Heart left ventricle (tissue), 16 donors: ENCODE measurements at regions of chr21 and their contacts with region 1.

Region 1: DNA sequence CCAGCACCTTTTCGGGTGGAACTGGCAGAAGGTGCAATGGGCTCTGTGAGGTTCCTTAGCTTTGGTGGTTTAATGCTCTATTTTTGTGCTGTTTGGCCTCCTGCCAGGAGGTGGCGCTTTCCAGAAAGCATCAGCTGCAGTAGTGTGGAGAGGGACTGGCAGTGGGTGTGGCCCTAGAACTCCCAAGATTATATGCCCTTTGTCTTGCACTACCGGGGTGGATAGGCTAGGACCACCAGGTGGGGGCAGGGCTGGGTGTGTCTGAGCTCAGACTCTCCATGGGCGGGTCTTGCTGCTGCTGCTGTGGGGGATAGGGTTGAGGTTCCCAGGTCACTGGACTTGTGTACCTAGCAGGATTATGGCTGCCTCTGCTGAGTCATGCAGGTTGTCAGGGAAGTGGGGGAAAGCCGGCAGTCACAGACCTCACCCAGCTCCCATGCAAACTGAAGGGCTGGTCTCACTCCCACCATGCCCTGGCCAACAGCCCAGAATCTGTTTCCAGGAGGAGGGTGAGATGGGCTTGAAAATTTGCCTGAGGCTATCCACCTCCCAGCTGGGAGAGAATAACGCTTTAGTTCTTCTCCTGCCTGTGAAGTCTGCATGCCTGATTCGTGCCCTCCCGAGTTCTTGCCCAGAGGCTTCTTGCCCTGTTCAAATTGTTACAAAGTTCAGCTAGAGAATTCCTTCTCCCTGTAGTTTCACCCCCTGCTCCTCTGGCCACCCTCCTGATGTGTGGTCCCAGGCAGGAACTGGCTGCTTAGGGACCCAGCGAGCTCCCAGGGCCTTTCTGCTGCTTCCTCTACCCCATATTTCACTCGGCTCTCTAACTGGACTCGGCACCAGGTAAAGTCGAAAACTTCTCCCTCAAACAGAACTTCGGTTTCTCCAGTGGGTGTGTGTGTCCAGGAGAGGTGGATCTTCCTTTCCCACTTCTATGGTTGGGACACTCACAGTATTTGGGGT is 76.5 kb upstream of the BTG3 start:
- DNase-seq: peak; percentile 33 to 61 (median 44)
- ATAC-seq: peak in 2 of 4 donors; percentile 45 to 52
- H3K4me3 ChIP-seq: no peak overlapping the region
- H3K27ac ChIP-seq: no peak overlapping the region
- H3K4me1 ChIP-seq: peaks cover 0 to 20% (median 8%) of the 10 kb centered on the region in 12 donors
- H3K27me3 ChIP-seq: no peaks in the 10 kb centered on the region
- CTCF ChIP-seq: peak in 6 of 12 donors; percentile 17 to 33 (median 24)
- POLR2A ChIP-seq: no peak

Region 2: GRCh38 chr21:17726047-17726830 is 37.0 kb after region 1 on chr21:
- intact Hi-C with region 1: loop called in 1 of 10 experiments (anchors 5 kb)
- DNase-seq: no peak
- ATAC-seq: no peak
- H3K4me3 ChIP-seq: no peak overlapping the region
- H3K27ac ChIP-seq: no peak overlapping the region
- H3K4me1 ChIP-seq: peaks cover 0 to 10% (median 0%) of the 10 kb centered on the region in 12 donors
- H3K27me3 ChIP-seq: no peaks in the 10 kb centered on the region
- CTCF ChIP-seq: peak in 2 of 12 donors; percentile 20 to 24
- POLR2A ChIP-seq: no peak

Region 3: DNA sequence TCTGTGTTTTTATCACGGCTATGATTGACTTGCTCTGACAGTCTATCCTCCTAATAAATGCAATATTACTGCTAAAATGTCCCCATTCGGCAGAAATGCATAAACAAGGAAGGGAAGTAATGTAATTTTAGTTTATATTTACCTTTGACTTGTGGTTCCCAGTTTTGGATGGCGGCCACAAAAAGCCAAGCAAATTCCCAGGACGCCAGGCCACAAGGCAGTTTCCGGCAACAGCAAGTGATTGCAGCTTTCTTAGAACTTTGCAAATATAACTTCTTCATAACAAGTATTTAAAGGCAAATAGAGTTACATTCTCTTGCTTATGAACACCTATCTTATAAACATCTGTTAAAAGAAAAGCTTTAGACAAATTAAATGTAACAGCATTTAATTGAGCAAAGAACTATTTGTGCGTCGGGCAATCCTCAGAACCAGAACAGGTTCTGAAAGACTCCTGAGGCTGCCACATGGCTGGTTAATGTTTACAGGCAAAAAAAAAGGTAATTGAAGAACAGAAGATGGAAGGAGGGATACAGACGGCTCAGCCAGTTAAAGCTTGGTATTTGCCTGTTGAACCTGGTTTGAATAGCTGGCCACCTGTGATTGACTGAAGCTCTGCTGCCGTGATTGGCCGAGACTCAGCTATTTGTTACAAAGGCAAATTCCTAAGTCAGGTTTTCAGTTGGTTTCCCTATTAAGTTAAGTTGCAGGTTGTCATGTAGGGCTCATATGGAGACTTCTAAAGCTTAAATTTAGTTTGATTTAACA is 49.2 kb after region 1 on chr21:
- intact Hi-C with region 1: no loop called
- DNase-seq: peak in 1 of 5 donors; percentile 24
- ATAC-seq: no peak
- H3K4me3 ChIP-seq: no peak overlapping the region
- H3K27ac ChIP-seq: no peak overlapping the region
- H3K4me1 ChIP-seq: peaks cover 0 to 8% (median 0%) of the 10 kb centered on the region in 12 donors
- H3K27me3 ChIP-seq: no peaks in the 10 kb centered on the region
- CTCF ChIP-seq: no peak
- POLR2A ChIP-seq: no peak

Region 4: GRCh38 chr21:17793246-17794123 is 104.3 kb after region 1 on chr21:
- intact Hi-C with region 1: loop called in 1 of 10 experiments (anchors 10 kb)
- DNase-seq: no peak
- ATAC-seq: peak in 3 of 4 donors; percentile 39 to 59 (median 50)
- H3K4me3 ChIP-seq: peak overlapping the region in 10 of 12 donors; percentile 23 to 58 (median 40)
- H3K27ac ChIP-seq: peak overlapping the region in 11 of 12 donors; percentile 8 to 85 (median 31)
- H3K4me1 ChIP-seq: peaks cover 0 to 53% (median 11%) of the 10 kb centered on the region in 12 donors
- H3K27me3 ChIP-seq: no peaks in the 10 kb centered on the region
- CTCF ChIP-seq: no peak
- POLR2A ChIP-seq: no peak

Region 5: GRCh38 chr21:17925000-17925610 is 235.9 kb after region 1 on chr21:
- intact Hi-C with region 1: loop called in 1 of 10 experiments (anchors 5 kb)
- DNase-seq: peak in 2 of 5 donors; percentile 41 to 42
- ATAC-seq: peak; percentile 59 to 88 (median 82)
- H3K4me3 ChIP-seq: no peak overlapping the region
- H3K27ac ChIP-seq: no peak overlapping the region
- H3K4me1 ChIP-seq: peaks cover 0 to 10% (median 0%) of the 10 kb centered on the region in 12 donors
- H3K27me3 ChIP-seq: no peaks in the 10 kb centered on the region
- CTCF ChIP-seq: peak; percentile 73 to 90 (median 82)
- POLR2A ChIP-seq: no peak

Region 6: GRCh38 chr21:18275781-18276180 is 586.6 kb after region 1 on chr21:
- intact Hi-C with region 1: no loop called
- DNase-seq: no peak
- ATAC-seq: no peak
- H3K4me3 ChIP-seq: no peak overlapping the region
- H3K27ac ChIP-seq: no peak overlapping the region
- H3K4me1 ChIP-seq: no peaks in the 10 kb centered on the region
- H3K27me3 ChIP-seq: no peaks in the 10 kb centered on the region
- CTCF ChIP-seq: no peak
- POLR2A ChIP-seq: no peak